ENCODE measurements at regions of chr4 and their contacts with region 1.

Region 1: DNA sequence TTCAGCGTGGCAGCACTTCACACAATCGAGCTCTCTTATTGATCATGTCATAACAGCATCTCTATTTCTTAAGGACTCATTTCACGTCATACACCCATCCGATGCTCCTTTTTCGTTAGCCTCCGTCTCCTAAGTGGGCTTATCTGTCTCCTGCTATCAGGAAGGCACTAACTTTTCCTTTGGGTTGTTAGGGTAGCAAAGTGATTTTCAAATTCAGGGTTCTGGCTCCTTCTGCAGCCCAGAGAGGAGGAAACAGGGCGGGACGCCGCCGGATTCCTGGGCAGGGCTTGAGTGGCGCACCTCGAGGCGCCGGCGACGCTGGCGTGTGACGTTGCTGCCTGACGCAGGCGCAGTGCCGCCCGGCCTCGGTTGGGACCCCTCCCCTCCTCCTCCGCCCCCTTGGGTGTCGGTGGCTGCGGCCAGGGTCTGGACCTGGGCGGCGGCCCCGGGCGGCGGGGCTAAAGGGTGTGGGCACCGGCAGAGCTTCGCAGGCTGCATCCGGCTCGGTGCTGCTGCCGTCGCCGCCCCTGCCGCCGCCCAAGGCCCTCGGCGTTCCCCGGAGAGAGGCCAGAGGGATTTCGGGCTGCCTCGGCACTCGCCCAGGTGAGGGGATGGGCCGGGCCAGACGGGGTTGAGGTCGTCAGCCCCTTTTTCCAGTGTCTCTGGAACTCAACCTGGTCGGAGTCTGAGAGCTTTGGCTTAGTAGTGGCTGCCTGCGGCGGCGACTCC is at the start of gene BLTP1:
- DNase-seq: peak; percentile 97
- H3K4me3 Mint-ChIP-seq: peak within 1 kb of the TSS; percentile 92
- H3K27ac Mint-ChIP-seq: peak within 1 kb of the TSS; percentile 95
- H3K4me1 Mint-ChIP-seq: peaks cover 41% of the 10 kb centered on the region
- H3K27me3 Mint-ChIP-seq: no peaks in the 10 kb centered on the region
- total RNA-seq, gene BLTP1: 26.2 and 28.9 TPM in 2 replicates

Region 2: DNA sequence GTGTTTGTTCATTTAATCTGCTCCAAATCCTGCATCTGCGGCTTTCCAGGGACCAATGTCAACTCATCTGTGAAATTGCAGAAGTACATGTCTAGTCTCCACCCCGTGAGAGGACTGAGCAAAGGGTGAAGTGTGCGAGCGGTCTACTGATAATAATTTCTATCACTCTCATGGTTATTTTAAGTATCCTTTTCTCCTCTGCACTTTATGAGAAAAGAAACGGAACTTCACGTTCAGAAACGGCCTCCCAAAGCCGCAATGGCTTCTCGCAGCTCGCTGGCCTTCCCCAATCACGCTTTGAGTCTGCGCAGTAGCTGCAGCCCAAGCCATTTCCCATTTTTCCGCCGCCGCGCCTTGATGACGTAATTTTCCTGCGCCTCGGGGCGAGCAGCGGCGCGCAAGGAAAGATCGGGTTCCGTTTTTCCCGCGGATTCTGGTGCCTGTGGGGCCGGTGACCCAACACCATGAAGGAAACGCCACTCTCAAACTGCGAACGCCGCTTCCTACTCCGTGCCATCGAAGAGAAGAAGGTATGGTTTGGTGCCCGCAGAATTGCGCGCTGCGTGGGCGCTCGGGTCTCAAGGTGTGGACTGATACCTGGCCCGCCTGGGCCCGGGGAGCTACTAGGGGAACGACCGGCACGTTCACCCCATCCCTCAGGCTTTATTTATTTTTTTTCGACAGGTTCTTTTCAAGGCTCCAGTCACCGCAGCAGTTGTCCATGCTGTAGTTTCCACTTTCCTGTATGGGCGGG is 351.0 kb before region 1 on chr4 and contains the start of gene EXOSC9:
- intact Hi-C with region 1: no loop called
- DNase-seq: peak; percentile 99
- H3K4me3 Mint-ChIP-seq: peak within 1 kb of the TSS; percentile 83
- H3K27ac Mint-ChIP-seq: peak within 1 kb of the TSS; percentile 96
- H3K4me1 Mint-ChIP-seq: peaks cover 47% of the 10 kb centered on the region
- H3K27me3 Mint-ChIP-seq: peaks cover 3% of the 10 kb centered on the region
- total RNA-seq, gene EXOSC9: 76.9 and 78.8 TPM in 2 replicates

Region 3: DNA sequence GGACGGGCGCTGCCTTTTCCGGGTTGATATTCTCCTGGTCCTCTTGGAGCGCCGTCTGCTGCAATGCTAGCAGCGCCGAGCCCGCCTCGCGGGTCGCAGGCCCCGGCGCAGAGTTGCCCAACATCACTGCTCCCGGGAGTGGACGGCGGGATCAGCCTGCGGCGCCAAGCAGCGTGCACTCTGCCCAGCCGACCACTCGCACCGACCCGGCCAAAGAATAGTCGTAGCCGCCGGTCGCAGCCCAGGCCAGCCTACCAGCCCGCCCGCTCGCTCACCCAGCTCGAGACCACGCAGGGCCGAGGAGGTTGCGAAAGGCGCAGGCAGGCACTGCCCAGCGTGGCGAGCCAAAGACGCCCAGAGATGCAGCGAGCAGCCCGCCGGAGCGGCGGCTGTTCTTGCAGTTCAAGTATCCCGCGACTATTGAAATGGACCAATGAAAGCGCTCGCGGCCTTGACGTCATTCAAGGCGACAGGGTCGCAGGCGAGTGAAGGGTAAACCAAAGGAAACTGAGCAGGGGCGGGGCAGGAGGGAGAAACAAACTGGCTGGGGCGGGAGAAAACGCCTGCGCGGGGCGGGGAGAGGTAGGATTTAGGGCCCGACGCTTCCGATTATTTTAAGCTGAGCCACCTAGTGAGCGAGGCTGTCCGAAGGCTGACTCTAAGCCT is 328.5 kb before region 1 on chr4 and contains the start of gene CCNA2:
- intact Hi-C with region 1: loop called (anchors 2 kb)
- DNase-seq: peak; percentile 99
- H3K4me3 Mint-ChIP-seq: peak within 1 kb of the TSS; percentile 98
- H3K27ac Mint-ChIP-seq: peak within 1 kb of the TSS; percentile 97
- H3K4me1 Mint-ChIP-seq: peaks cover 31% of the 10 kb centered on the region
- H3K27me3 Mint-ChIP-seq: no peaks in the 10 kb centered on the region
- total RNA-seq, gene CCNA2: 72.0 and 73.4 TPM in 2 replicates

Region 4: GRCh38 chr4:121950212-121950679 is 201.9 kb before region 1 on chr4:
- intact Hi-C with region 1: loop called (anchors 2 kb)
- DNase-seq: peak; percentile 95
- H3K4me3 Mint-ChIP-seq: peak overlapping the region; percentile 92
- H3K27ac Mint-ChIP-seq: peak overlapping the region; percentile 48
- H3K4me1 Mint-ChIP-seq: peaks cover 14% of the 10 kb centered on the region
- H3K27me3 Mint-ChIP-seq: peaks cover 64% of the 10 kb centered on the region

Region 5: GRCh38 chr4:122393276-122393675 is 241.1 kb after region 1 on chr4:
- intact Hi-C with region 1: no loop called
- DNase-seq: no peak
- H3K4me3 Mint-ChIP-seq: no peak overlapping the region
- H3K27ac Mint-ChIP-seq: no peak overlapping the region
- H3K4me1 Mint-ChIP-seq: no peaks in the 10 kb centered on the region
- H3K27me3 Mint-ChIP-seq: peaks cover 2% of the 10 kb centered on the region

Region 6: GRCh38 chr4:122450847-122451246 is 298.7 kb after region 1 on chr4:
- intact Hi-C with region 1: loop called (anchors 5 kb)
- DNase-seq: peak; percentile 69
- H3K4me3 Mint-ChIP-seq: peak overlapping the region; percentile 74
- H3K27ac Mint-ChIP-seq: peak overlapping the region; percentile 92
- H3K4me1 Mint-ChIP-seq: peaks cover 24% of the 10 kb centered on the region
- H3K27me3 Mint-ChIP-seq: no peaks in the 10 kb centered on the region

Measured in activated CD4-positive, alpha-beta T cell treated with anti-CD3 and anti-CD28 coated beads, Interleukin-2, amount 10 ng/mL, durations not matched to agents 24 days and 14 days (primary cell).